ENCODE measurements at regions of chr17 and their contacts with region 1.

Region 1: DNA sequence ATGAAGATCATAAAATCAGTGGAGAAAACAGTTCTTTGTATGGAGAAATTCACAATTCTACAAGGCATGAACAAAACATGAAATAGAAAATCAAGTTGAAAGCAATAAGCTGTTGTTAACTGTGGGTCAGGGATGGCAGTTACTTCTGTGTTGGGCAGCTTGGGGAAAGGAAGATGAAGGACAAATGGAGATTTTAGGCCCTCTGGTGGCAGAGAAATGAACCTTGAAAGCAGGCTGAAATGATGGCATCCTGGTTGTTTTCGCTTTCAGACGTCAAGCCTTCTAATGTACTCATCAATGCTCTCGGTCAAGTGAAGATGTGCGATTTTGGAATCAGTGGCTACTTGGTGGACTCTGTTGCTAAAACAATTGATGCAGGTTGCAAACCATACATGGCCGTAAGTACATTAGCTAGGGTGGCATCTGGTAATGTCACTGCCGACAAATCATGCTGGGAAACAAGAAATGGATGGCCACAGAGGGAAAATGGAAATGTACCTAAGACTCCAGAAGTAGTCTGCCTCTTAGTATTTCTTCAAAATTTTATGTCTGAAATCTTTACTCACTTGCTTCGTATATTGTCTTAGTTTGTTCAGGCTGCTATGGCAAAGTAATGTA is 108.9 kb downstream of the MAP2K6 start:
- DNase-seq: no peak
- ATAC-seq: peak; percentile 83

Region 2: DNA sequence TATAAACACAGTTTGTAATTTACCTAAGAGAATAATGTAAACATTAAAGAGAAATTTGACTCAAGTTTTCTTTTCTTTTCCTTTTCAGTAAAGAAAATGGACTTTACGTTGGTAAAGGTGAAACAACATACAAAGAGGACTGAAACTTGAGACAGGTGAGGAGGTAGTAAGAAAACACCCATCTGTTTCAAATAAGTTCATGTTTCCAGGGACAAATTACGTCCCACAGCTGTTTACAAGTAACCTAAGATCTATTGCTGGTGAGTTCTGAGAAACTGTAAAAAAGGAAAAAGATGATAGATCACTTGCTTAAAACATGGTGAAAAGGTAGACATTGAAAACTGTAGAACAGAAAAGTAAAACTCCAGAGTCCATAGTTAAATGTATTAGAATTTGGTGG is 191.6 kb before region 1 on chr17:
- intact Hi-C with region 1: loop called in 1 of 2 experiments (anchors 5 kb)
- DNase-seq: no peak
- ATAC-seq: no peak